ENCODE measurements at regions of chr12 and their contacts with region 1.

Region 1: GRCh38 chr12:121060149-121061001 is 21.3 kb upstream of the OASL start:
- DNase-seq: no peak
- H3K4me3 ChIP-seq: peak overlapping the region in 57 of 59 donors; percentile 1 to 61 (median 42)
- H3K27ac ChIP-seq: peak overlapping the region in 51 of 59 donors; percentile 4 to 84 (median 66)
- H3K27me3 ChIP-seq: no peaks in the 10 kb centered on the region
- CTCF ChIP-seq: peak; percentile 28 to 70 (median 54)

Region 2: DNA sequence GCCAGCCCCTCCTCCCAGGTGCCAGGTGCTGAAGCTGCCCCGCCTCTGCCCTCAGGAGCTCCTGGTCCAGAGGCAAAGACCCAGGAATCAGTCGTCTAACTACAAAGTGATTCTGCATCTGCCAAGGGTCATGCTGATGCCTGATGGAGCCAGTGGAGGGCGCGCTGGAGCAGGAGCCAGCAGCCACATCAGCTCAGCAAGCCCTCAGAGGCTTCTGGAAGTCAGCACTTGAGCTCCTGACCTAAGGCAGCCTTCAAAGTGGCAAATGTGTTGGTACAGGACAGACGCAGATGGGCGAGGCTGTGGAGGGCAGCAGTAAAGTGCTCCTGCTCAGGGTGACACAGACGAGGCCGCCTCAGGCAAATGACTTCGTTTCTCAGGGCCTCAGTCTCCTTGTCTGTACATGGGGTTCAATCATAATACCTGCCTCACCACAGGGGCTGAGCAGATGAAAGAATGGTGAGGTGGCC is 55.0 kb before region 1 on chr12:
- intact Hi-C with region 1: no loop called
- DNase-seq: peak in 3 of 10 donors; percentile 17 to 54 (median 40)
- H3K4me3 ChIP-seq: no peak overlapping the region
- H3K27ac ChIP-seq: peak overlapping the region in 2 of 59 donors; percentile 18 to 20
- H3K27me3 ChIP-seq: no peaks in the 10 kb centered on the region
- CTCF ChIP-seq: peak in 52 of 56 donors; percentile 13 to 54 (median 34)

Region 3: GRCh38 chr12:121026274-121027045 is 33.9 kb before region 1 on chr12:
- intact Hi-C with region 1: no loop called
- DNase-seq: no peak
- H3K4me3 ChIP-seq: no peak overlapping the region
- H3K27ac ChIP-seq: no peak overlapping the region
- H3K27me3 ChIP-seq: no peaks in the 10 kb centered on the region
- CTCF ChIP-seq: no peak

Region 4: GRCh38 chr12:121095544-121096198 is 35.3 kb after region 1 on chr12:
- intact Hi-C with region 1: loop called in 1 of 2 experiments (anchors 5 kb)
- DNase-seq: peak; percentile 56 to 82 (median 72)
- H3K4me3 ChIP-seq: peak overlapping the region; percentile 31 to 73 (median 52)
- H3K27ac ChIP-seq: peak overlapping the region in 4 of 59 donors; percentile 21 to 29 (median 26)
- H3K27me3 ChIP-seq: no peaks in the 10 kb centered on the region
- CTCF ChIP-seq: peak; percentile 56 to 91 (median 80)

Region 5: GRCh38 chr12:121110211-121110940 is 50.0 kb after region 1 on chr12:
- intact Hi-C with region 1: loop called in 1 of 2 experiments (anchors 5 kb)
- DNase-seq: peak; percentile 65 to 81 (median 73)
- H3K4me3 ChIP-seq: no peak overlapping the region
- H3K27ac ChIP-seq: peak overlapping the region in 25 of 59 donors; percentile 1 to 76 (median 36)
- H3K27me3 ChIP-seq: no peaks in the 10 kb centered on the region
- CTCF ChIP-seq: peak; percentile 80 to 99 (median 96)

Region 6: GRCh38 chr12:121232977-121233627 is 172.7 kb after region 1 on chr12:
- intact Hi-C with region 1: loop called in 1 of 2 experiments (anchors 5 kb)
- DNase-seq: no peak
- H3K4me3 ChIP-seq: no peak overlapping the region
- H3K27ac ChIP-seq: peak overlapping the region in 5 of 59 donors; percentile 8 to 74 (median 14)
- H3K27me3 ChIP-seq: no peaks in the 10 kb centered on the region
- CTCF ChIP-seq: no peak

Measured in dorsolateral prefrontal cortex (tissue), 120 donors.